ENCODE measurements at regions of chr10 and their contacts with region 1.

Region 1: GRCh38 chr10:84693006-84693405 is 364.6 kb downstream of the CCSER2 start:
- DNase-seq: no peak
- CTCF ChIP-seq: no peak

Region 2: DNA sequence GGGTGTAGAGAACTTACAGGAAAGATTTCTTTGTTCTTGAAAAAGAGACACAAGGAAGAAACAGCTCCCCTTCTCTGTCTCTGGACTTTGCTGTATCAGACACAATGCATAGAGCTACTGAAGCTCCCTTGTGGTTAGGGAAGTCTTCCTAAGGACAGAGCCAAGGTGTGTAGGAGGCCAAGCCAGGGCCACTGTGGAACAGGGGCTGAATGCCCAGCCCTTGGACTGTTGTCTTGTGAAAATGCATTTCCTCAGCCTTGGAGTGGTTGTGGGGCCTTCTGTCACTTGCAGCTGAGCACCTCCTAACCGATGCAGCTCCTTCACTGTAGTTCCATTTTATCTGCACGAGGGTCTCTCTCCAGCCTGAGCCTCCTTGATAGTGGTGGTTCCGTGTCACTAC is 11.2 kb before region 1 on chr10:
- CTCF ChIA-PET with region 1: interaction called, 15 read pairs
- POLR2A ChIA-PET with region 1: no interaction called
- DNase-seq: no peak
- CTCF ChIP-seq: no peak